H1 (cell line): ENCODE measurements at regions of chr11 and their contacts with region 1.

Region 1: DNA sequence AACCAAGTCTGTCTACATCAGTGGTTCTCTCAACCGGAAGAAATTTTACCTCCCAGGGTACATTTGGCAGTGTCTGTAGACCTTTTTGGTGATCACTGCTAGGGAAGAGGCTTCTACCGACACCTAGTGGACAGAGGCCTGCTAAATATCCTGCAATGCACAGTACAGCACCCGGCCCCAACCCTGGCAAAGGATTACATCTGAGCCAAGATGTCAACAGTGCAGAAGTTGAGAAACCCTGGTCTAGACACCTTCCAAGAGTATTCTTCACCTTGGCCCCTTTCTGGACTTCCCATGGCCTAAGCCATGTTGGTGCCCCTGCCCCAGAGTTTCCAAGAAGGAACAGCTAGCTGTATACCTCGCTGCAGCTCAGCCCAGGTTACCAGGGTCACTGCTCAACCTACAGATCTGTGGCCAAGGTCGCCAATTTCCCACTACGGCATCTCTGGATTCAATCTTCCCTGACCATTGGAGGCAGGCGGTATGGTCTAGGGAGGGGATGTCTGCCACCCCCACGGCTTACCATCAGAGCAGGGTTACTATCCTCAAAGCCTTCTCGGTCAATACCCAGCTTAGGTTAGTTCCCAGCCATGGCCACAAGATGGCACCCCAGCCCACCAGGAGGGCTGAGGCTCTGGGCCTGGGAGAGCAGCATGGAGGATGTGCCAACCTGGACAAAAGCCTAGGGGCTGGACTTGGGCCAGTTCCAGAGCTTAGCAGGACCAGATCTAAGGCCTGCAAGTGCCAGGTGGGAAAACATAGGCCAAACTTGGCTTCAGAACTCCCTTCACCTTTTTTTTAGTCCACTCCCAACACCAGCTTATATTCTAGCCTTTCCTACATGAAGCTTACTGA is 3.7 kb upstream of the KCNC1 start:
- DNase-seq: peak; percentile 58 to 95
- H3K4me3 ChIP-seq: no peak overlapping the region
- H3K27ac ChIP-seq: no peak overlapping the region
- H3K4me1 ChIP-seq: peaks cover 0 to 4% (median under 1%) of the 10 kb centered on the region in 4 experiments; a peak in 3 of 7 replicates
- H3K27me3 ChIP-seq: peaks cover 9 to 30% (median 24%) of the 10 kb centered on the region in 4 experiments
- CTCF ChIP-seq: peak; percentile 93 to 98 (median 94)
- EP300 ChIP-seq: no peak
- POLR2A ChIP-seq: no peak
- RAD21 ChIP-seq: peak; percentile 98

Region 2: DNA sequence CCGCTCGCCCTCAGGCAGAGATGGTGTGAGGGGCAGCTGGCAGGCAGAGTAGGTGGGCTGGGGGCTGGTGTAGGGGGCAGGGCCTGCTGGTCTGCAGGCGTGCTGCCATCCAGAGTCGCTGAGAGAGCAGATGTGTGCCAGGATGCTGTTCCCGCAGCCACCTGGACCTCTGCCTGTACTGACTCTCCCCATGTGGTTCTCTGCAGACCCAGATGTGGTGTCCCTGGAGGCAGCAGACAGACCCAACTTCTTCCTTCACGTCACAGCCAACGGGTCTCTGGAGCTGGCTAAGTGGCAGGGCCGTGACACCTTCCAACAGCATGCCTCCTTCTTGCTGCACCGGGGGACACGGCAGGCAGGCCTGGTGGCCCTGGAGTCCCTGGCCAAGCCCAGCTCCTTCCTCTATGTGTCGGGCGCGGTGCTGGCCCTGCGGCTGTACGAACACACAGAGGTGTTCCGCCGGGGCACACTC is 125.1 kb before region 1 on chr11:
- CTCF ChIA-PET with region 1: interaction called, 165 read pairs
- POLR2A ChIA-PET with region 1: no interaction called
- DNase-seq: no peak
- H3K4me3 ChIP-seq: no peak overlapping the region
- H3K27ac ChIP-seq: no peak overlapping the region
- H3K4me1 ChIP-seq: peaks cover 0 to 4% (median 2%) of the 10 kb centered on the region in 4 experiments; a peak in 3 of 7 replicates
- H3K27me3 ChIP-seq: no peaks in the 10 kb centered on the region; a peak in 2 of 7 replicates
- CTCF ChIP-seq: no peak
- EP300 ChIP-seq: no peak
- POLR2A ChIP-seq: no peak
- RAD21 ChIP-seq: no peak

Region 3: GRCh38 chr11:17743808-17744119 is 12.9 kb after region 1 on chr11:
- CTCF ChIA-PET with region 1: interaction called, 290 read pairs
- POLR2A ChIA-PET with region 1: no interaction called
- DNase-seq: no peak
- H3K4me3 ChIP-seq: no peak overlapping the region
- H3K27ac ChIP-seq: no peak overlapping the region
- H3K4me1 ChIP-seq: peaks cover 0 to 7% (median 3%) of the 10 kb centered on the region in 4 experiments; a peak in 6 of 7 replicates
- H3K27me3 ChIP-seq: peaks cover 0 to 6% (median 2%) of the 10 kb centered on the region in 4 experiments; a peak in 5 of 7 replicates
- CTCF ChIP-seq: no peak
- EP300 ChIP-seq: no peak
- POLR2A ChIP-seq: no peak
- RAD21 ChIP-seq: no peak

Region 4: GRCh38 chr11:17786824-17787525 is 56.1 kb after region 1 on chr11:
- CTCF ChIA-PET with region 1: interaction called, 13 read pairs
- POLR2A ChIA-PET with region 1: no interaction called
- DNase-seq: no peak
- H3K4me3 ChIP-seq: no peak overlapping the region
- H3K27ac ChIP-seq: no peak overlapping the region
- H3K4me1 ChIP-seq: peaks cover 0 to 2% (median 0%) of the 10 kb centered on the region in 4 experiments; a peak in 1 of 7 replicates
- H3K27me3 ChIP-seq: no peaks in the 10 kb centered on the region
- CTCF ChIP-seq: 0 out of 4 replicates have a peak, but pooled peaks of 1 of the 3 experiments have one; percentile 11
- EP300 ChIP-seq: no peak
- POLR2A ChIP-seq: no peak
- RAD21 ChIP-seq: peak in 1 of 2 experiments; percentile 12; a peak in 3 of 4 replicates

Region 5: DNA sequence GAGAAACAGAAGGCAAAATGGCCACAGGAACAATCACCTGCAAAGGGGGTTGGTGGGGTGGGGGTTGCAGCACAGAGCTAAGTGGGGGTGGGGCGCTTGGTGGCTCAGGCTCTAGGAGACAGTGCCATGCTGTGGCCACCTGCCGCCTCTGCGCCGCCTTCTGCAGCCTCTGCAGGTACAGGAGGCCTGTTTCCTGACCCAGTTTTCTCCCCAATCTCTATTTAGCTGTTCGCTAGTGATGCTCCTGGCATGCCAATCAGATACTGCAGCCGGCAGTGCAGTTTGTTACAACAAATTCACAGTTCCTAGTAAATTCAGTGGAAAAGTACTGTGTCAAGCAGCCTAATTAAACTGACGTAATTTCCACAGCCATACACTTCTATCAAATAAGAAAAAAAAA is 175.6 kb after region 1 on chr11:
- CTCF ChIA-PET with region 1: interaction called, 40 read pairs
- POLR2A ChIA-PET with region 1: no interaction called
- DNase-seq: peak; percentile 70 to 73
- H3K4me3 ChIP-seq: peak overlapping the region in 1 of 4 experiments; percentile 20; a peak in 1 of 8 replicates
- H3K27ac ChIP-seq: no peak overlapping the region
- H3K4me1 ChIP-seq: peaks cover 4 to 10% (median 6%) of the 10 kb centered on the region in 4 experiments; a peak in 6 of 7 replicates
- H3K27me3 ChIP-seq: no peaks in the 10 kb centered on the region
- CTCF ChIP-seq: peak; percentile 62 to 86 (median 67)
- EP300 ChIP-seq: no peak
- POLR2A ChIP-seq: no peak
- RAD21 ChIP-seq: peak; percentile 74 to 79

Region 6: GRCh38 chr11:17939542-17939941 is 208.7 kb after region 1 on chr11:
- CTCF ChIA-PET with region 1: no interaction called
- POLR2A ChIA-PET with region 1: no interaction called
- DNase-seq: no peak
- H3K4me3 ChIP-seq: no peak overlapping the region
- H3K27ac ChIP-seq: no peak overlapping the region
- H3K4me1 ChIP-seq: no peaks in the 10 kb centered on the region
- H3K27me3 ChIP-seq: no peaks in the 10 kb centered on the region
- CTCF ChIP-seq: no peak
- EP300 ChIP-seq: no peak
- POLR2A ChIP-seq: no peak
- RAD21 ChIP-seq: no peak

Region 7: GRCh38 chr11:17991783-17992433 is 261.1 kb after region 1 on chr11:
- CTCF ChIA-PET with region 1: interaction called, 13 read pairs
- POLR2A ChIA-PET with region 1: no interaction called
- DNase-seq: no peak
- H3K4me3 ChIP-seq: no peak overlapping the region
- H3K27ac ChIP-seq: no peak overlapping the region
- H3K4me1 ChIP-seq: no peaks in the 10 kb centered on the region
- H3K27me3 ChIP-seq: no peaks in the 10 kb centered on the region
- CTCF ChIP-seq: peak in 2 of 3 experiments; percentile 55 to 71; a peak in 3 of 4 replicates
- EP300 ChIP-seq: no peak
- POLR2A ChIP-seq: no peak
- RAD21 ChIP-seq: peak; percentile 57 to 67

Region 8: GRCh38 chr11:18105802-18106574 is 375.2 kb after region 1 on chr11 and contains the start of gene SAAL1:
- CTCF ChIA-PET with region 1: no interaction called
- POLR2A ChIA-PET with region 1: no interaction called
- DNase-seq: peak; percentile 46 to 98
- H3K4me3 ChIP-seq: peak within 1 kb of the TSS; percentile 89 to 93 (median 91)
- H3K27ac ChIP-seq: peak within 1 kb of the TSS; percentile 75
- H3K4me1 ChIP-seq: 0 out of 7 replicates have a peak, but pooled peaks cover 0 to 2% (median 0%) of the 10 kb centered on the region in 4 experiments
- H3K27me3 ChIP-seq: peaks cover 0 to 3% (median 0%) of the 10 kb centered on the region in 4 experiments; a peak in 1 of 7 replicates
- CTCF ChIP-seq: peak; percentile 87 to 95 (median 93)
- EP300 ChIP-seq: peak in 1 of 2 experiments; percentile 52; a peak in 1 of 3 replicates
- POLR2A ChIP-seq: peak in 1 of 2 experiments; percentile 90; a peak in 2 of 3 replicates
- RAD21 ChIP-seq: peak; percentile 6 to 36; a peak in 1 of 4 replicates
- total RNA-seq, gene SAAL1: 46.6 and 48.3 TPM in 2 replicates